ENCODE measurements at regions of chr1 and their contacts with region 1.

Region 1: GRCh38 chr1:67430352-67431155 is at the start of gene SERBP1:
- DNase-seq: peak; percentile 99
- H3K4me3 Mint-ChIP-seq: peak within 1 kb of the TSS; percentile 95
- H3K27ac Mint-ChIP-seq: peak within 1 kb of the TSS; percentile 98
- H3K4me1 Mint-ChIP-seq: peaks cover 47% of the 10 kb centered on the region
- H3K27me3 Mint-ChIP-seq: no peaks in the 10 kb centered on the region
- total RNA-seq, gene SERBP1: 619 and 630 TPM in 2 replicates

Region 2: GRCh38 chr1:66791621-66792610 is 638.6 kb before region 1 on chr1:
- intact Hi-C with region 1: no loop called
- DNase-seq: no peak
- H3K4me3 Mint-ChIP-seq: no peak overlapping the region
- H3K27ac Mint-ChIP-seq: no peak overlapping the region
- H3K4me1 Mint-ChIP-seq: peaks cover 14% of the 10 kb centered on the region
- H3K27me3 Mint-ChIP-seq: no peaks in the 10 kb centered on the region

Region 3: DNA sequence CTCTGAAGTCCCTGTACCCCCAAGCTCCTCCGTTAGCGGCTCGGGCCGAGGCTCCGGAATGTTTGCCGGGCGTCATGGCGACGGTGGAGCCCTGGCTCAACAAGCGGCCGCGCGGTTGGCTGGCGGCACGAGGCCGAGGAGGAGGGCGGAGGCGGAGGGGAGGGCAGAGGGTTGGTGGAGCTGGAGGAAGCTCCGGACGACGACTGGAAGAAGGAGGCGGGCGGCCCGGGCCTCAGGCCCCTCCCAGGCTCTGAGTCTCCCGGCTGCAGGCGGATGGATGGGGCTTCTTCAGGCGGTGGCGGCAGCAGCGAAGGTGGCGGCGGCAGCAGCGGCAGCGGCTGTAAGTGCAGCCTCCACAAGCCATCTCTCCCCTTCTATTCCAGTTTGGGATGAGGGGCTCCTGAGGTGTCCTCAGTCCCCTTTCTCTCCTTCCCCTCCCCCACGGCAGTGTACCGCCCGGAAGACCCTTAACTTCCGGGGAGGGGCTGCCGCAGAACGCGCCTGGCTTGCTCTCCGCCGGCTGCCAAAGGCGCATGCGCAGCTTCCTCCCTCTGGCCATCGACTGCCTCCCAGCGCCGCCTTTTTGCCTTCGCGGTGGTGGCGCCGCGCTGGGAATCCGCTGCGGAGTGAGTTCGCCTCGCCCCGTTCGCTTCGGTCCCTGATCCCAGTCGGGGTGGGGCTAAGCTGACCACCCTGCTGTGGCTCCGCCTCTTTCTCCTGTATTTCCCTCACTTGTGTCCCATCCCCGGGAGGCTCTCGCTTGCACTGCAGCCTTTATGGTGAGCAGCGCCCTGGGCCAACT is 505.6 kb before region 1 on chr1 and contains the starts of genes DNAI4 and MIER1:
- intact Hi-C with region 1: loop called (anchors 2 kb)
- DNase-seq: peak; percentile 99
- H3K4me3 Mint-ChIP-seq: peak within 1 kb of the TSS; percentile 99
- H3K27ac Mint-ChIP-seq: peak within 1 kb of the TSS; percentile 97
- H3K4me1 Mint-ChIP-seq: peaks cover 41% of the 10 kb centered on the region
- H3K27me3 Mint-ChIP-seq: no peaks in the 10 kb centered on the region
- total RNA-seq, gene DNAI4: 0.26 and 2.7 TPM in 2 replicates
- total RNA-seq, gene MIER1: 51.8 and 54.9 TPM in 2 replicates

Region 4: GRCh38 chr1:67053785-67054772 is 376.5 kb before region 1 on chr1 and contains the start of gene SLC35D1:
- intact Hi-C with region 1: loop called (anchors 1 kb)
- DNase-seq: peak; percentile 94
- H3K4me3 Mint-ChIP-seq: peak within 1 kb of the TSS; percentile 86
- H3K27ac Mint-ChIP-seq: peak within 1 kb of the TSS; percentile 95
- H3K4me1 Mint-ChIP-seq: peaks cover 28% of the 10 kb centered on the region
- H3K27me3 Mint-ChIP-seq: peaks cover 10% of the 10 kb centered on the region
- total RNA-seq, gene SLC35D1: 15.9 and 16.1 TPM in 2 replicates

Region 5: DNA sequence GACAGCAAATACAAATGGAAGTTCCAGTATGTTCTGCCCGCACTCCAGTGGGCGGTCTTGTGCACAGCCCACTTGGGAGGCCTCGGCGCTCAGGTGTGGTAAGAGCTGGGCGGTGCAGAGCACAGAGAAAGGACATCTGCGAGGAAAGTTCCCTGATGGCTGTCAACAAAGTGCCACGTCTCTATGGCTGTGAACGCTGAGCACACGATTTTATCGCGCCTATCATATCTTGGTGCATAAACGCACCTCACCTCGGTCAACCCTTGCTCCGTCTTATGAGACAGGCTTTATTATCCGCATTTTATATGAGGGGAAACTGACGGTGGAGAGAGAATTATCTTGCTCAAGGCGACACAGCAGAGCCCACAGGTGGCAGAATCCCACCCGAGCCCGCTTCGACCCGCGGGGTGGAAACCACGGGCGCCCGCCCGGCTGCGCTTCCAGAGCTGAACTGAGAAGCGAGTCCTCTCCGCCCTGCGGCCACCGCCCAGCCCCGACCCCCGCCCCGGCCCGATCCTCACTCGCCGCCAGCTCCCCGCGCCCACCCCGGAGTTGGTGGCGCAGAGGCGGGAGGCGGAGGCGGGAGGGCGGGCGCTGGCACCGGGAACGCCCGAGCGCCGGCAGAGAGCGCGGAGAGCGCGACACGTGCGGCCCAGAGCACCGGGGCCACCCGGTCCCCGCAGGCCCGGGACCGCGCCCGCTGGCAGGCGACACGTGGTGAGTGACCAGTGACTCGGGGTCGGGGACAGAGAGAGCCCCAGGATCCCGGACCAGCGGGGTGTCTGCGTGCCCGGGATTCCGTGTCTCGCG is 123.1 kb before region 1 on chr1 and contains the start of gene IL12RB2:
- intact Hi-C with region 1: loop called (anchors 1 kb)
- DNase-seq: peak; percentile 93
- H3K4me3 Mint-ChIP-seq: peak within 1 kb of the TSS; percentile 97
- H3K27ac Mint-ChIP-seq: peak within 1 kb of the TSS; percentile 100
- H3K4me1 Mint-ChIP-seq: peaks cover 64% of the 10 kb centered on the region
- H3K27me3 Mint-ChIP-seq: no peaks in the 10 kb centered on the region
- total RNA-seq, gene IL12RB2: 138 and 146 TPM in 2 replicates

Region 6: DNA sequence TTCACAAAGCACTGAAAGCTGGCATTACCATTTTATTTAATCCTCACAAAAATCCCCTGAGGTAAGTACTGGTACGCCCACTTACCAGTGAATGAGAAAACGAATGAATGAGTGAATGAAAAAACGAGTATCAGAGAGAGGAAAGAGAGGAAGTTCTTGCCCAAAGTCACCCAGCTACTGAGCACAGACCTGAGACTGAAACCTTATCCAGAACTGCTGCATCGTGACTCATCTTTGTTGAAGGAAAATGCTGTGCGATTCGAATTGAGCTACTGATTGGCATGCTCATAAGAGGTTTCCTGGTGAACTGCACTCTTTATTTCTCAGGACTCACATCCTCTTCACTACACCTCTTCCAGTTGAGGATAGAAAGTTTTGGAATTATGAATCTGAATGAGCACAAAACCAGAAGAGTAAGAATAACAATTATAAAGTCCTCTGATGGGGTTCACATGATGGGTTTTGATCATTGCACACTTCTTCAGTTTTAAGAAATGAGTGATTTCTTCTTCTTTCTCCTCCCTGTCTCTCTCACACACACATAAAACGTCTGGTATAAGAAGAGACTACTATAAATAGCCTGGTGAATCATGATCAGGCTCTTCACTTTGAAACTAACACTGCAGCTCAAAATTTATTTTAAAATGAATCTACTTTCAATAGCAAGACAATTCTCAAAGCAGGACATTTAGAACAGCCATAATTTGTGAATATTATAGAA is 90.8 kb before region 1 on chr1:
- intact Hi-C with region 1: loop called (anchors 1 kb)
- DNase-seq: peak; percentile 85
- H3K4me3 Mint-ChIP-seq: peak overlapping the region; percentile 68
- H3K27ac Mint-ChIP-seq: peak overlapping the region; percentile 94
- H3K4me1 Mint-ChIP-seq: peaks cover 77% of the 10 kb centered on the region
- H3K27me3 Mint-ChIP-seq: no peaks in the 10 kb centered on the region

Region 7: DNA sequence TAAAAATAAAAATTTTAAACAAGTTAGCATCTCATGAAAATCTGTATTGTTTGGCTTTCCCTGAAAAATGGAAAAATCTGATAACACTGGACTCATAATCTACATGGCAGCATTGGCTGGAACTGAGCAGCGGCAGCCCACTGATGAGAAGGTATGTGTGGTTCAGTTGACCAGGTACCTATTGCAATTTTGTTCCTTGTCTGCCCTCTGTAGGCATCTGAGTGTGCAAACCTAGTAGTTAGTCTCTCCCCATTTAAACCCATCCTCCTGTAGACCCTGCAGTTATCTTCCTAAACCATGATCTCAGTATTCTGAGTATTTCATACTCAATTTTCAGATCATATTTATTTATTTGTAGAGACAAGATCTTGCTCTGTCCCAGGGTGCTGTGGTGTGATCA is 59.1 kb after region 1 on chr1:
- intact Hi-C with region 1: loop called (anchors 5 kb)
- DNase-seq: no peak
- H3K4me3 Mint-ChIP-seq: no peak overlapping the region
- H3K27ac Mint-ChIP-seq: no peak overlapping the region
- H3K4me1 Mint-ChIP-seq: peaks cover 4% of the 10 kb centered on the region
- H3K27me3 Mint-ChIP-seq: no peaks in the 10 kb centered on the region